Activated T-helper 1 cell treated with anti-CD3 and anti-CD28 coated beads, Interleukin-12 subunit alpha, Interleukin-12 subunit beta, Interleukin-2, Interleukin-4 antibody, amounts not matched to agents 30 ng/mL and 10 ng/mL and 1 ng/mL, durations not matched to agents 14 hours and 24 hours and 36 hours (primary cell): ENCODE measurements at regions of chr12 and their contacts with region 1.

Region 1: GRCh38 chr12:12954878-12955625 is 3.1 kb upstream of the GPRC5D start:
- DNase-seq: no peak
- H3K4me3 Mint-ChIP-seq: no peak overlapping the region
- H3K27ac Mint-ChIP-seq: no peak overlapping the region
- H3K4me1 Mint-ChIP-seq: no peaks in the 10 kb centered on the region
- H3K27me3 Mint-ChIP-seq: peaks cover 2% of the 10 kb centered on the region

Region 2: GRCh38 chr12:14129611-14130195 is 1174.7 kb after region 1 on chr12:
- intact Hi-C with region 1: loop called (anchors 5 kb)
- DNase-seq: no peak
- H3K4me3 Mint-ChIP-seq: no peak overlapping the region
- H3K27ac Mint-ChIP-seq: no peak overlapping the region
- H3K4me1 Mint-ChIP-seq: no peaks in the 10 kb centered on the region
- H3K27me3 Mint-ChIP-seq: no peaks in the 10 kb centered on the region